MCF 10A (cell line): ENCODE measurements at regions of chr14 and their contacts with region 1.

Region 1: GRCh38 chr14:22556990-22557623 is 31.9 kb downstream of the DAD1 start:
- DNase-seq: peak; percentile 78
- H3K4me3 Mint-ChIP-seq: peak overlapping the region; percentile 62
- H3K27ac Mint-ChIP-seq: peak overlapping the region; percentile 46
- H3K4me1 Mint-ChIP-seq: peaks cover 22% of the 10 kb centered on the region
- H3K27me3 Mint-ChIP-seq: no peaks in the 10 kb centered on the region
- CTCF ChIP-seq: peak; percentile 98

Region 2: DNA sequence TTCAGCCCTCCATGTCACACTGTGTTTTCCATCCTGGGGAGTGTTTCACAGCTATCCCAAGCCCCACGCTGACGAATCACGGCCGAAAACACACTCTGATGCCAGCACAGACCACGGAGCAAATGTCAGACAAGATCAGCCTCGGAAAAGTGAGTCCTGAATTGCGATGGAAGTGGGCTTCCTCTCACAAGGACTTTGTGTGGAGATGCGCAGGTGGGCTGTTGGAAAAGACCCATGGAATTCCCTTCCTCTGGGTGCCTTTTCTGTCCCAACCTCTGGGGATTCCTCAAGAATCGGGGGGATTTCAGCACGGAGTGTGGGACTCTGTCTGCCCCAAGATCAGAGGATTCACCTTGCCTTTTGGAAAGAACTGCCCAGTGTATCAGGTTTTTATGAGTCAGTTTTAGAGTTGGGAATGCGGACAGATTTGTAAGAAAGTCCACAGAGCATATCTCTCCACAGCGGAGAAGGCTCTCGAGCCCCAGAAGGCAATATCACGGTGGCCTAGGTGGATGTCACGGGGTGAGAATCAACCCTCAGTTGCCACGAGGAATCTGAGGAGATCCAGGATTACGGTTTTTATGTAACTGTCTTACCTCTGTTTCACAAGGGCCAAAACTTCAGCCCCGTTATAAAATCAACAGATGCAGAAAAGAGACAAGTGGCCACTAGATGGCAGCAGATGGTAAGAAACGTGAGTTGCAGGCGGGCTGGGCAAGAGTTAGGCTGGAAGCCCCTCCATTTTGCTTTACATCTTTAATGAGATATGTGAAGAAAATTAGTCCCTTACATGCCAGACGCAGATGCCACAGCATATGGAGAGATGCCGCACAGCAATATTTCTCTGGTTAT is 170.0 kb before region 1 on chr14:
- CTCF ChIA-PET with region 1: interaction called, 11 read pairs
- POLR2A ChIA-PET with region 1: no interaction called
- intact Hi-C with region 1: loop called (anchors 1 kb)
- DNase-seq: peak; percentile 79
- H3K4me3 Mint-ChIP-seq: no peak overlapping the region
- H3K27ac Mint-ChIP-seq: no peak overlapping the region
- H3K4me1 Mint-ChIP-seq: peaks cover 27% of the 10 kb centered on the region
- H3K27me3 Mint-ChIP-seq: no peaks in the 10 kb centered on the region
- CTCF ChIP-seq: peak; percentile 72

Region 3: DNA sequence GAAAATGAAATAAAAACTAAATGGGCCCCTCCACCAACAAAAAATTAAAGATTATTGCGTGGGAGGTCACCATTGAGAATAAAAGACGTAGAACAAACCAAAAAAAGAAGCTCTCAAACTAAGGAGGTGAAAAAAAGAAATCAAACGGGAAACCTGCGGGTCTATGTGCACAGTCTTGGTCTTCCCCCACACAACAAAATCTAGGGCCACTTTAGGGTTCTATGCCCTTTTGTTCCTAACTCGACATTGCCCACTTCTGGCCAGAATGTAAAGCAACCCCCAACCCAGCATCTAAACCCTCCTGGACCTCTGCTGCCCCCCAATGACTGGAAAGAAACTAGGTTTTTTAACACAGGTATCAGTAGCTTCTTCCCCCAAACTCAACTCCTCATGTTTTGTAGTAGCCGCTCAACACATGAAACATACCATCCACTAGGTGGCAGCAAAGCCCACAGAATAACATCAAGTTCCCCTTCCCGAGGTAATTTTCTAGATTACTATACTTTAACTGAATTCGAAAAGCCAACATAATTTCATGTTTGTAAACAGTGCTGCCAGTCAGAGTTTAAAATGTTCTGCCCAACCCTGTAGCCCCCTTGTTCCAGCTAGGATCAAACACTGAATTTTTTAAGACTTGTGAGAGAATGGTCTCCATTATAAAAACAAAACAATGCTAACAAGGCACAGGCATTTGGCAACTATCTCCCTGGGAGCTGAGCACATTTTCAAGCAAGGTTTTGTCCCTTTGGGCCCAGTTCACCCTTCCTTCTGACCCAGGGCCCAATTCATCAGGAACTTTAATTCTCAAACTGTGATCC is 13.2 kb after region 1 on chr14:
- CTCF ChIA-PET with region 1: interaction called, 39 read pairs
- POLR2A ChIA-PET with region 1: interaction called, 7 read pairs
- intact Hi-C with region 1: no loop called
- DNase-seq: peak; percentile 89
- H3K4me3 Mint-ChIP-seq: no peak overlapping the region
- H3K27ac Mint-ChIP-seq: peak overlapping the region; percentile 12
- H3K4me1 Mint-ChIP-seq: peaks cover 8% of the 10 kb centered on the region
- H3K27me3 Mint-ChIP-seq: no peaks in the 10 kb centered on the region
- CTCF ChIP-seq: peak; percentile 68

Region 4: DNA sequence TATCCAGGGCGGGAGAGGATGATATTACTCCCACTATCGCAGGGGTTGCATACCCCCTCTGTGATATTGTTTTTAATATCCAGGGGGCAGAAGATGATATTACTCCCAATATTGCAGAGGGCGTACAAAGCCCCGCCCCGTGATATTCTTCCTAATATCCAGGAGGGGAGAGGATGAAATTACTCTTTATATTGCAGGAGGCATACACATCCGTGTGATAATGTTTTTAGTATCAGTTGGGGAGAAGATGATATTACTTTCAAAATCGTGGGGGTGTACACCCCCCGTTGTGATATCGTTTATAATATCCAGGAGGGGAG is 156.5 kb after region 1 on chr14:
- CTCF ChIA-PET with region 1: interaction called, 3 read pairs
- POLR2A ChIA-PET with region 1: no interaction called
- intact Hi-C with region 1: loop called (anchors 5 kb)
- DNase-seq: no peak
- H3K4me3 Mint-ChIP-seq: peak overlapping the region; percentile 72
- H3K27ac Mint-ChIP-seq: no peak overlapping the region
- H3K4me1 Mint-ChIP-seq: no peaks in the 10 kb centered on the region
- H3K27me3 Mint-ChIP-seq: peaks cover 34% of the 10 kb centered on the region
- CTCF ChIP-seq: no peak

Region 5: DNA sequence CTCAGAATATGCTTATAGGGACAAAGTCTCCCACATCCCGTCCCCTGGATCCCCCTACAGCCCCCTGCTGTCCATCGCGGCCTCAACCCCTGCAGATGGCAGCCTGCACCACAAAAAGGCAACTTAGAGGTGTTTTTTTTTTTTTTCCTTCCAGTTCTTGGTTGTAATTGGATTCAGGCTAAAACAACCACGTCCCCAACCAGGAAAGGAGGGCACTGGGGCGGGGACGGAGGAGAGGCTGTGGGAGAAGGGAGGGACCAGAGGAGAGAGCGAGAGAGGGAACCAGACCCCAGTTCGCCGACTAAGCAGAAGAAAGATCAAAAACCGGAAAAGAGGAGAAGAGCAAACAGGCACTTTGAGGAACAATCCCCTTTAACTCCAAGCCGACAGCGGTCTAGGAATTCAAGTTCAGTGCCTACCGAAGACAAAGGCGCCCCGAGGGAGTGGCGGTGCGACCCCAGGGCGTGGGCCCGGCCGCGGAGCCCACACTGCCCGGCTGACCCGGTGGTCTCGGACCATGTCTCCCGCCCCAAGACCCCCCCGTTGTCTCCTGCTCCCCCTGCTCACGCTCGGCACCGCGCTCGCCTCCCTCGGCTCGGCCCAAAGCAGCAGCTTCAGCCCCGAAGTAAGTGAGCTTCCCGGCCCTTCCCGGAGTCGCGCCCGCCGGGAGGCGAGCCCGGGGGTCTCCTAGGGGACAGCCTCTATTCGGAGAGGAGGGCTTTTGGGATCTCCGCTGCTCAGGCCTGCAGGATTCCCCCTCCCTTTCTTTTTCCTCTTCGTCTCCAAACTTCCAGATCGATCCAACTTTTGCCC is 279.4 kb after region 1 on chr14 and contains the start of gene MMP14:
- CTCF ChIA-PET with region 1: interaction called, 27 read pairs
- POLR2A ChIA-PET with region 1: interaction called, 8 read pairs
- intact Hi-C with region 1: no loop called
- DNase-seq: peak; percentile 78
- H3K4me3 Mint-ChIP-seq: peak within 1 kb of the TSS; percentile 99
- H3K27ac Mint-ChIP-seq: peak within 1 kb of the TSS; percentile 98
- H3K4me1 Mint-ChIP-seq: peaks cover 21% of the 10 kb centered on the region
- H3K27me3 Mint-ChIP-seq: no peaks in the 10 kb centered on the region
- CTCF ChIP-seq: no peak
- total RNA-seq, gene MMP14: 71.5 and 78.6 TPM in 2 replicates

Region 6: DNA sequence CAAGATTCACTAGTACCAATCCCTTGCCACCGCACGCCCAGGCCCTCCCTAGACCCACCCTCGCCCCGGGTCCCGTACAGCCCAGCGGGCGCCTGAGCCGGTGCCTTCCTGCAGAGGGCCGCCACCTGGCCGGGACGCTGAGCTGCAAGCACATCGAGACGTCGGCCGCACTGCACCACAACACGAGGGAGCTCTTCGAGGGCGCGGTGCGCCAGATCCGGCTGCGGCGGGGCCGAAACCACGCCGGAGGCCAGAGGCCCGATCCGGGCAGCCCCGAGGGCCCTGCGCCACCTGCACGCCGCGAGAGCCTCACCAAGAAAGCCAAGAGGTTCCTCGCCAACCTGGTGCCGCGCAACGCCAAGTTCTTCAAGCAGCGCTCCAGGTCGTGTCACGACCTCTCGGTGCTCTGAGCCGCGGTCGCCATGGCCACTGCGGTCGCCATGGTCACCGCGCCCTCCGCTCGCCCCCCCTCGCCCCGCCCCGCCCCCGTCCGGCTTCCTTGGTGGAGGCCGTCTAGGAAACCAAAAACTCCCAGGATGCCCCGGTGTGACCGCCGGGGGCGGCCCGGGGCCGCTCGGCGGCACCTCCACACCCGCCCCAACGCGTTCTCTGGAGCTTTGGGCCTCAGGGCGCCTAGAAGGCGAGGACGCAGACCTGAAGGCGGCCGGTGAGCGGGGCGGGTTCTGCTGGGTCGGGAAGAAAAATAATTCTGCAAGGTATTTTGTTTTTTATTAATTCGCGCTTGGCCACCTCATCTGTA is 329.6 kb after region 1 on chr14:
- CTCF ChIA-PET with region 1: interaction called, 13 read pairs
- POLR2A ChIA-PET with region 1: no interaction called
- intact Hi-C with region 1: no loop called
- DNase-seq: peak; percentile 82
- H3K4me3 Mint-ChIP-seq: peak overlapping the region; percentile 95
- H3K27ac Mint-ChIP-seq: peak overlapping the region; percentile 90
- H3K4me1 Mint-ChIP-seq: peaks cover 25% of the 10 kb centered on the region
- H3K27me3 Mint-ChIP-seq: no peaks in the 10 kb centered on the region
- CTCF ChIP-seq: no peak